ENCODE measurements at regions of chr10 and their contacts with region 1.

Region 1: DNA sequence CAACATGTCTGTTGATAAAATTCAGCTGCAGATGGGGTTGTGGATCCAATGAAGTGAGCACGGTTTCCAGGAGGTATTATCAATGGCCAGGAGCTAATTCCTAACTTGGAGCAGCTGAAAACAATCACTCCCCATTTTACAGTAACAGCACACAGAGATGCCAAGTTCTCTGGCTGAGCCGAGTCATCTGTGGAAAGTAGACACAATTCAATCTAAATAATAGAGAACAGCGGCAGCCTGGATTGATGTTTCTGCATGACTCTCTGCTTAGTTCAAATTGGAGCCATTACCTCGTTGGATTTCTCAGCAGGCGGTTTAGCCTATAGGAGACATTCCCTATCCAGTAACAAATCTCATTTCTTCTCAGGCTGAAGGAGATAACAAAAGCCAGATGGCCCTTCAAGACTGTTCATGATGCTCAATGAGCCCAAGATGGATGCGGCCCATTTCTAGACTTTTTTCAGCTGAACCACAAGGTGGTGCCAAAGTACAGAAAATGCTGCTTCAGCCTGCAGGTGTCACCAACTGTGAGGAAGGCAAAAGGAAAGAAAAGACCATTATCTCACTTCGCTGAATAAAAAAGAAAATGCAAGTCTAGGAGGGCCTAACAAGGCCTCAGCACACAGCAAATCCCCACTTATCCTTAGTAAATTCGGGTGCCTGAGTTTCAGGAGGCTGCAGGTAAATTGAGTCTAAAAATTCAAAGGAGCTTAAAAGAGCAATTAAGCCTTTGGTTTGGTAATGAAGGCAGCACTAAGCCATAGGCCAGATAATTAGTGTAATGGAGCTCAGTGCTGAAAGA is 83.7 kb downstream of the SLC16A9 start:
- DNase-seq: peak; percentile 60 to 90
- H3K4me3 ChIP-seq: no peak overlapping the region
- H3K4me1 ChIP-seq: no peaks in the 10 kb centered on the region
- H3K27me3 ChIP-seq: no peaks in the 10 kb centered on the region

Region 2: GRCh38 chr10:58781873-58782488 is 843.9 kb before region 1 on chr10:
- in situ Hi-C with region 1: loop called (anchors 10 kb)
- DNase-seq: peak; percentile 10 to 52
- H3K4me3 ChIP-seq: no peak overlapping the region
- H3K4me1 ChIP-seq: no peaks in the 10 kb centered on the region
- H3K27me3 ChIP-seq: no peaks in the 10 kb centered on the region

Region 3: DNA sequence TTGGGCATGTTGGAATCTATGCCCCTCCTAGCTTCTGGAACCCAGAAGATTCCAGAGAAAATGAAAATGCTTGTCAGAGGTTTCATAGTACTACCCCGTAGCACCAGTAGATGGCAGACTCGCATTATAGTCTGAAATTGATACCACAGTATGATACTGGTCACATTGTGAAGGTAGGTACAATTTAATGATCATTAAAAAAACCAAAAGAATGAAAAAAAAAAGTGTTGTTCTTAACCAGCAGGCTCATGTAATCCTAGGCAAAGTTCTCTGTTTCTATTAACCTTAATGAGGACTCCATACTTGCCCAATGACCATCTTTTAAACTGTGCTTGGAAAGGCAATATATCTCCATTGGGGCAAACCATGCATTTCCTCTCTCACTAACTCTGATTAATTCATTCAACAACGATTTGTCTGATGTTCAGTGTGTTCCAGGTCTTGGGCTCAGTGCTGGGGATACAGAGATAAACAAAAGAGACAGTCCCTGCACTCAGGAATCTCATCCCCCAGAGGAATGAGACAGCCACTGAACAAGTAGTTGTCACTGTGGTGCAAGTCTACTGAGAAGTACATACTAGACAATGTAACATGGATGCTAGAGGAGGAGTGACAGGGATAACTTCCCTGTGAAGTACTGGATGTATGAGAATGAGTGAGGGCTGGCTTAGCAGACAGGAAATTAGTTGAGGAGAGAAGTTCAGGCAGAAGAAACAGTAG is 673.0 kb before region 1 on chr10:
- in situ Hi-C with region 1: loop called (anchors 10 kb)
- DNase-seq: peak; percentile 40 to 74
- H3K4me3 ChIP-seq: no peak overlapping the region
- H3K4me1 ChIP-seq: no peaks in the 10 kb centered on the region
- H3K27me3 ChIP-seq: no peaks in the 10 kb centered on the region

Region 4: GRCh38 chr10:59240582-59241183 is 385.2 kb before region 1 on chr10:
- in situ Hi-C with region 1: loop called (anchors 5 kb)
- DNase-seq: peak; percentile 20 to 48
- H3K4me3 ChIP-seq: no peak overlapping the region
- H3K4me1 ChIP-seq: no peaks in the 10 kb centered on the region; the same call in 1 of the 2 replicates
- H3K27me3 ChIP-seq: no peaks in the 10 kb centered on the region

Region 5: GRCh38 chr10:59808896-59809643 is 183.1 kb after region 1 on chr10:
- in situ Hi-C with region 1: loop called (anchors 5 kb)
- DNase-seq: peak; percentile 59 to 88
- H3K4me3 ChIP-seq: no peak overlapping the region
- H3K4me1 ChIP-seq: peaks cover 4% of the 10 kb centered on the region
- H3K27me3 ChIP-seq: no peaks in the 10 kb centered on the region

Region 6: GRCh38 chr10:60008816-60009215 is 382.9 kb after region 1 on chr10:
- in situ Hi-C with region 1: no loop called
- DNase-seq: no peak
- H3K4me3 ChIP-seq: no peak overlapping the region
- H3K4me1 ChIP-seq: no peaks in the 10 kb centered on the region
- H3K27me3 ChIP-seq: peaks cover 3% of the 10 kb centered on the region; the same call in 1 of the 2 replicates

Region 7: GRCh38 chr10:60032723-60033122 is 406.8 kb after region 1 on chr10:
- in situ Hi-C with region 1: loop called (anchors 10 kb)
- DNase-seq: peak; percentile 43 to 65
- H3K4me3 ChIP-seq: no peak overlapping the region
- H3K4me1 ChIP-seq: no peaks in the 10 kb centered on the region
- H3K27me3 ChIP-seq: no peaks in the 10 kb centered on the region

Region 8: GRCh38 chr10:60434418-60435046 is 808.6 kb after region 1 on chr10:
- in situ Hi-C with region 1: loop called (anchors 25 kb)
- DNase-seq: peak; percentile 64 to 78
- H3K4me3 ChIP-seq: no peak overlapping the region
- H3K4me1 ChIP-seq: no peaks in the 10 kb centered on the region
- H3K27me3 ChIP-seq: no peaks in the 10 kb centered on the region